Activated CD8-positive, alpha-beta T cell treated with anti-CD3 and anti-CD28 coated beads, Interleukin-2, amount 10 ng/mL, durations not matched to agents 7 days and 5 days (primary cell): ENCODE measurements at regions of chr7 and their contacts with region 1.

Region 1: GRCh38 chr7:142535123-142535779 is 214.0 kb upstream of the PRSS1 start:
- DNase-seq: peak; percentile 82
- ATAC-seq: peak; percentile 95
- H3K4me3 Mint-ChIP-seq: peak overlapping the region; percentile 52
- H3K27ac Mint-ChIP-seq: peak overlapping the region; percentile 70
- H3K4me1 Mint-ChIP-seq: peaks cover 29% of the 10 kb centered on the region
- H3K27me3 Mint-ChIP-seq: peaks cover 2% of the 10 kb centered on the region

Region 2: GRCh38 chr7:142516038-142516501 is 19.2 kb before region 1 on chr7:
- CTCF ChIA-PET with region 1: interaction called, 13 read pairs
- POLR2A ChIA-PET with region 1: no interaction called
- DNase-seq: peak; percentile 56
- ATAC-seq: peak; percentile 79
- H3K4me3 Mint-ChIP-seq: no peak overlapping the region
- H3K27ac Mint-ChIP-seq: no peak overlapping the region
- H3K4me1 Mint-ChIP-seq: peaks cover 31% of the 10 kb centered on the region
- H3K27me3 Mint-ChIP-seq: peaks cover 4% of the 10 kb centered on the region

Region 3: DNA sequence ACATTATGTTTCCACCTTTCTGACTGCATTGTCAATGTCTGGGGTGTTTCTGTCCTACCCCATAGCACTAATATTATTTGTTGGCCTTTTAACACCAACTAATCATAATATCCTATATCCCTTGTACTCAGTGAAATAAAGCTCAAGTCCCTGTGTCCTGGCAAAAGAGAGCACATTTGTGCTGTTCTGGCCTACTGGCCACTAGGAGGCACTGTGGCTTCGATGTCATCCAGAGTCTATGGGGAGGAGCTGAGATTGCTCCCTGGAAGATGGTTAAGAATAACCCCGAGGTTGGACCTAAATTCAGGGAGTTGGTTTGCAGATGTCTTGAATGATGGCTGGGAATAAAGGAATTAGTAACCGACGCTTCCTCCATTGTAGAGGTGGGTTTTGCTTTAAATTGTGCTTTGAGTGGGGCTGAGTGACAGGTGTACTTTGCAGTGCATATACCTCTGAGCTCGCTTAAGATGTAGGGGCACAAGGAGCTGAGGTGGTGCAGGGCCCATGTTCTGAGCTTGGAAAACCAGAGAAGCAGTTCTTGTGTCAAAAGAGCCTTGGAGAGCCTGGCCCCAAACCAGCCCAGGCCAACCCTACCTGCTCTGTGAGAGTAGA is 22.8 kb after region 1 on chr7:
- CTCF ChIA-PET with region 1: interaction called, 53 read pairs
- POLR2A ChIA-PET with region 1: no interaction called
- DNase-seq: peak; percentile 65
- ATAC-seq: peak; percentile 83
- H3K4me3 Mint-ChIP-seq: peak overlapping the region; percentile 4
- H3K27ac Mint-ChIP-seq: no peak overlapping the region
- H3K4me1 Mint-ChIP-seq: peaks cover 15% of the 10 kb centered on the region
- H3K27me3 Mint-ChIP-seq: peaks cover 9% of the 10 kb centered on the region

Region 4: GRCh38 chr7:142603870-142604448 is 68.7 kb after region 1 on chr7:
- CTCF ChIA-PET with region 1: interaction called, 10 read pairs
- POLR2A ChIA-PET with region 1: no interaction called
- DNase-seq: peak; percentile 66
- ATAC-seq: peak; percentile 53
- H3K4me3 Mint-ChIP-seq: no peak overlapping the region
- H3K27ac Mint-ChIP-seq: no peak overlapping the region
- H3K4me1 Mint-ChIP-seq: peaks cover under 1% of the 10 kb centered on the region
- H3K27me3 Mint-ChIP-seq: peaks cover 12% of the 10 kb centered on the region

Region 5: DNA sequence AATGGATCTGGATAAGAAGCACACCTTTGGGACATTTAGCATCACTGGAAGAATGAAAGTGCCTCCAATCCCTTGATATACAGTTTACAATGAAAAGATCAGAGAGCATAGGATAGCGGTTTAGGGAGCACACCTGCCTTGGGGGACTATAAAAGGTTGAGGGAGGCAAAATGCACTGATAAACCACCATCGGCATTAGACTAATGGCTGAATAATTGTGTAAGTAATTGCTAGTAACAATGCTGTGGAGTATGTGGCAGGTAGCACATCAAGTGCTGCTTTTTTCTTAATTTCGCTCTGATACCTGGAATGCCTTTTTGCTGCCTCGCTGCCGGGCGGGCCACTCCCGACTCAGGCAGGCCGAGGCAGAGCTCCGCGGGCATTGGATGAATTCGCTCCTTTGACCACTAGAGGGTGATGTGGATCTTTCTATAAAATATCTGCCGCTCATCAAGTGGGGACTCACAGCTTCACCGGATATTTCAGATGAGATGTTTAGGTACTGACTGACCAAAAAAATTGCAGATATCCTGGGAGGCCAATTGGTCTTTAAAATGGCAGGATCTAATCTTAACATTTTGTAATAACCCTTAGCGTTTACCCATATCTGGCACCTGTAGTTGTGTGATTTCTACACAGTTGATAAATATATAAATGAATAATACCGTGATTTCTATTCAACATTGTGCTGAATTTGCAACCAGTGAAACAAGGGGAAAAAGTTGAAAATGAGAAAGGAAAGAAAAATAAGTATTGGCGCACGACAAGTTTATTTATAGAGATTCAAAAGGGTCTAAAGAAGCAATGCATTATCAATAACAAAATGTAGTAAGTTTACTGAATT is 97.3 kb after region 1 on chr7:
- CTCF ChIA-PET with region 1: interaction called, 11 read pairs
- POLR2A ChIA-PET with region 1: no interaction called
- DNase-seq: peak; percentile 71
- ATAC-seq: peak; percentile 81
- H3K4me3 Mint-ChIP-seq: no peak overlapping the region
- H3K27ac Mint-ChIP-seq: no peak overlapping the region
- H3K4me1 Mint-ChIP-seq: peaks cover 18% of the 10 kb centered on the region
- H3K27me3 Mint-ChIP-seq: peaks cover 13% of the 10 kb centered on the region

Region 6: GRCh38 chr7:143240291-143241168 is 705.3 kb after region 1 on chr7:
- CTCF ChIA-PET with region 1: no interaction called
- POLR2A ChIA-PET with region 1: no interaction called
- DNase-seq: peak; percentile 83
- ATAC-seq: peak; percentile 85
- H3K4me3 Mint-ChIP-seq: no peak overlapping the region
- H3K27ac Mint-ChIP-seq: peak overlapping the region; percentile 51
- H3K4me1 Mint-ChIP-seq: peaks cover 37% of the 10 kb centered on the region
- H3K27me3 Mint-ChIP-seq: peaks cover 11% of the 10 kb centered on the region